ENCODE measurements at regions of chr11 and their contacts with region 1.

Region 1: DNA sequence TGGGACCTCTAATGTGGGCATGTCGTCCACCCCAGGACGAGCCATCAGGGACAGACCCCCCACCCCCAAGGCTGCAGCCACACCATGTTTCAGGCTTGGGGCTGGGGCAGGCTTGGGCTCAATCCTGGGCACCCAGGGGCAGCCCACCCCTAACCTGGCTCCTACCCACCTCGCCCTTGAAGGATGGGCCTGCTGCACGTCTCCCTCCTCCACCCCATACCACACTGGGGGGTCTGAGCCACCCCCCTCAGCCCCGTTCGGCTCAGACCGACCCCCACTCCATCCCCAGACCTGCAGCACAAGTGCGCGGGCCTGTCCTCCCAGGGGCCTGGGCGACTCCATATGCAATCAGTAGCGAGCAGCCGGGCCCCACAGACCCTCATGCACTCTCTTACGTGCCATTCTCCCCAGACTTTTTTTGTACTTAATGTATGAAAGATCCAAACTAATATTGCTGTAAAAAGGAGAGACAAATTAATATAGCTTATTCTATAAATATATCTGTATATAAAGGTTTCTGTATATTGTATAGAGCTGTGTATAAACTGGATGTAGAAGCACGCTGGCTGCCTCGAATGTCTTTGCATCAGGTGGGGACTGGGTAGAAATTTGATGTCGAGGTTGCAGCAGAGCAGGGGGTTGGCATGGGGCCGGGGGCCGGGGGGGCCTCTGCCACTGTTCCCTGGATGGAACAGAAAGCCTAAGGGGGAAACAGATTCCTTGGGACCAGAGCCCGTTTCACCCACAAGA is 5.8 kb upstream of the MYRF start:
- DNase-seq: no peak
- ATAC-seq: no peak
- H3K4me3 ChIP-seq: no peak overlapping the region
- H3K4me3 Mint-ChIP-seq: no peak overlapping the region
- H3K27ac ChIP-seq: no peak overlapping the region
- H3K27ac Mint-ChIP-seq: no peak overlapping the region
- H3K4me1 ChIP-seq: peaks cover 0 to 5% of the 10 kb centered on the region in 2 experiments
- H3K4me1 Mint-ChIP-seq: peaks cover 0 to 6% (median 2%) of the 10 kb centered on the region in 3 donors
- H3K27me3 ChIP-seq: peaks cover 0 to 41% of the 10 kb centered on the region in 2 experiments
- H3K27me3 Mint-ChIP-seq: peaks cover 14 to 22% of the 10 kb centered on the region in 2 donors

Region 2: GRCh38 chr11:61627567-61628445 is 118.8 kb before region 1 on chr11:
- CTCF ChIA-PET with region 1: no interaction called
- POLR2A ChIA-PET with region 1: no interaction called
- DNase-seq: peak in 15 of 35 experiments; percentile 2 to 40 (median 11)
- ATAC-seq: no peak
- H3K4me3 ChIP-seq: no peak overlapping the region
- H3K4me3 Mint-ChIP-seq: no peak overlapping the region
- H3K27ac ChIP-seq: no peak overlapping the region
- H3K27ac Mint-ChIP-seq: no peak overlapping the region
- H3K4me1 ChIP-seq: no peaks in the 10 kb centered on the region
- H3K4me1 Mint-ChIP-seq: no peaks in the 10 kb centered on the region
- H3K27me3 ChIP-seq: peaks cover 0 to 43% of the 10 kb centered on the region in 2 experiments
- H3K27me3 Mint-ChIP-seq: peaks cover 10 to 29% of the 10 kb centered on the region in 2 donors

Region 3: GRCh38 chr11:61778920-61779650 is 32.5 kb after region 1 on chr11:
- CTCF ChIA-PET with region 1: interaction called in 1 of 2 experiments, 10 read pairs
- POLR2A ChIA-PET with region 1: no interaction called
- DNase-seq: no peak
- ATAC-seq: no peak
- H3K4me3 ChIP-seq: no peak overlapping the region
- H3K4me3 Mint-ChIP-seq: no peak overlapping the region
- H3K27ac ChIP-seq: no peak overlapping the region
- H3K27ac Mint-ChIP-seq: no peak overlapping the region
- H3K4me1 ChIP-seq: peaks cover 0 to 34% of the 10 kb centered on the region in 2 experiments
- H3K4me1 Mint-ChIP-seq: peaks cover 7 to 21% (median 11%) of the 10 kb centered on the region in 3 donors
- H3K27me3 ChIP-seq: peaks cover 0 to 29% of the 10 kb centered on the region in 2 experiments
- H3K27me3 Mint-ChIP-seq: peaks cover 0 to 2% of the 10 kb centered on the region in 2 donors

Region 4: DNA sequence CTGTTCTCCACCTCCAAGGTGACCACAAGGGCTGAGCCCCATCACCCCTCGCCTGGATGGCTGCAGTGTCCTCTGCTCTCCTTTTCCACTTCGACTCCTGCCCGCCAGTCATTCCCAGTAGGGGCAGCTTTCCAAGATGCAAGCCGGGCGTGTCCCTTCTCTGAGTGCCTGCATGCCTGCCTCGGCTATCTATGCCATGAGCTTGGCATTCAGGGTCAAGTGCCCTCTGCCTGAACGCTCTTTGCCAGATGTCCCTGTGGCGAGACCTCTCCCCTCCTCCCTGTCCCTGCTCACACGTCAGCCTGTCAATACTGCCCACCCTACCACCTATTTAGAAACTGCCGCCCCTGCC is 127.8 kb after region 1 on chr11:
- CTCF ChIA-PET with region 1: no interaction called
- POLR2A ChIA-PET with region 1: no interaction called
- DNase-seq: no peak
- ATAC-seq: no peak
- H3K4me3 ChIP-seq: no peak overlapping the region
- H3K4me3 Mint-ChIP-seq: no peak overlapping the region
- H3K27ac ChIP-seq: no peak overlapping the region
- H3K27ac Mint-ChIP-seq: no peak overlapping the region
- H3K4me1 ChIP-seq: peaks cover 0 to 7% of the 10 kb centered on the region in 2 experiments
- H3K4me1 Mint-ChIP-seq: peaks cover 6 to 8% (median 7%) of the 10 kb centered on the region in 3 donors
- H3K27me3 ChIP-seq: peaks cover 0 to 18% of the 10 kb centered on the region in 2 experiments
- H3K27me3 Mint-ChIP-seq: peaks cover 0 to 7% of the 10 kb centered on the region in 2 donors